A673 (cell line): ENCODE measurements at regions of chr17 and their contacts with region 1.

Region 1: DNA sequence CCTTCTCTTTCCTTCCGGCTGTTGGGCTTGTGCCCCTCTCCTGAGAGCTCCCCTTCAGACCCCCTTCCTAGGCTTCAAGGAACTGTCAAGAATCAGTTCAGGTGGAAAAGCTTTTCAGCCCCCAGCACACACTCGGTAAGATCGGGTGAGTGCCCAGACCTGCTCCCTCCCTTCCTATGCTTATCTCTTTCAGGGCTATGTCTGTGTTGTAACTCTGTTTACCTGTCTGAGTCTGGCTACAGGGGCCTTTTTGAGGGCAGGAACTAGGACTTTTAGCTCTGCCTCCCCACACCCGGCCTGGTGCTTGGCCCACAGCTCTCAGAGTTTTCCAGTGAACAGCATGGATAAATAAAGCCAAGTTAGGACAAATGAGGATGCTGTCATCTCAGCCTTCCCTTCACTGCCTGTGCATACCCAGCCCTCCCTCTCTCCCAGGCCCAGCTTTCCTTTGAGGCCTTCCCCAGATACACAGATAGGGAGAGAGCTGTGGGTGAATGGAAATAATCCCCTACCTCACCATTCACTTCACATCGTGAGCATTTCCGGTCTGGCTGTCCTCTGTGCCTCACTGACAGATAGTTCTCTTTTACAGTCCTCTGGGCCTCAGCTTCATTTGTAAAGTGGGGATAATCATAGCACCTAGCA is 5.7 kb upstream of the MRPS23 start:
- DNase-seq: no peak
- H3K4me3 ChIP-seq: no peak overlapping the region
- H3K27ac ChIP-seq: no peak overlapping the region
- H3K4me1 ChIP-seq: peaks cover 18% of the 10 kb centered on the region
- H3K27me3 ChIP-seq: no peaks in the 10 kb centered on the region
- CTCF ChIP-seq: no peak

Region 2: DNA sequence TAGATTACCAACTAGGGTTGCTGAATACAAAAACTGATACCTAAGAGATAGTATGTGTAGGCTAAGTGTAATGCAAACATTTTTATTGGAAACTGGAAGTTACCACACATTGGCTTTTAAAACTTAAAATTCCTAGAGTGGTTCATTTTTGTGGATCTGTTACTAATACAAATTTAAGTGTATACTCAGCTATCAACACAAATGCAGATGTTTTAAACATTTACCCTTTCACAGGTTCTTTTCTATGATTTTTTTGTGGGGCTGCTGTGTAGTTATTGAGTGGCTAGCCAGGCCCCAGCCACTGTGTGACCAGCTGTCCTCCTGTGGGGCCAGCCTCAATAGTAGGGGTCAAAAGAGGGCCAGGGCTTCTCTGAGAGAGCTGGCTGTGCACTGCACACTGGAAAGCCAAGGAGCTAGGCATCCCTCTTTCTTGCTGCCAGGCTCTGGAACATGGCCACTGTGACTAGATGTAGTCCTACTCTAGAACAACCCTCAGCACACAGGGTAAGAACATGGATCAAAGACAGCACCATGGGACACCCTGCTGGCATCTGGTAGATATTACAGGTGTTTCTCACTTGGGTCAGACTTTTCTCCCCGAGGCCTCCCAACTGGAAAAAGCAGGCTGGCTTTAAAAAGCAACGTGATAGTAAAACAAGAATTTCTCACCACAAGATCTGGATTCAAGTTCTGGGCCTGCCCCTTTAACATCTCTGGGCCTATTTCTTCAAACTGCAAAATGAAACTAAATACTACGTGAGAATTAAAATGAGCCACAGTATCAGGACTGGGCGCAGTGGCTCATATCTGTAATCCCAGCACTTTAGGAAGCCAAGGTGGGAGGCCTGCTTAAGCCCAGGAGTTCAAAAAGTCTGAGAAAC is 139.8 kb after region 1 on chr17:
- CTCF ChIA-PET with region 1: interaction called, 32 read pairs
- POLR2A ChIA-PET with region 1: no interaction called
- intact Hi-C with region 1: loop called (anchors 1 kb)
- DNase-seq: peak; percentile 88
- H3K4me3 ChIP-seq: no peak overlapping the region
- H3K27ac ChIP-seq: peak overlapping the region; percentile 7
- H3K4me1 ChIP-seq: peaks cover 15% of the 10 kb centered on the region
- H3K27me3 ChIP-seq: no peaks in the 10 kb centered on the region
- CTCF ChIP-seq: peak; percentile 62